Calu3 (cell line): ENCODE measurements at regions of chr4 and their contacts with region 1.

Region 1: GRCh38 chr4:176163041-176163440 is 32.3 kb downstream of the SPATA4 start:
- DNase-seq: no peak
- H3K4me3 Mint-ChIP-seq: no peak overlapping the region
- H3K27ac Mint-ChIP-seq: no peak overlapping the region
- H3K4me1 Mint-ChIP-seq: no peaks in the 10 kb centered on the region
- H3K27me3 Mint-ChIP-seq: no peaks in the 10 kb centered on the region
- CTCF ChIP-seq: no peak

Region 2: DNA sequence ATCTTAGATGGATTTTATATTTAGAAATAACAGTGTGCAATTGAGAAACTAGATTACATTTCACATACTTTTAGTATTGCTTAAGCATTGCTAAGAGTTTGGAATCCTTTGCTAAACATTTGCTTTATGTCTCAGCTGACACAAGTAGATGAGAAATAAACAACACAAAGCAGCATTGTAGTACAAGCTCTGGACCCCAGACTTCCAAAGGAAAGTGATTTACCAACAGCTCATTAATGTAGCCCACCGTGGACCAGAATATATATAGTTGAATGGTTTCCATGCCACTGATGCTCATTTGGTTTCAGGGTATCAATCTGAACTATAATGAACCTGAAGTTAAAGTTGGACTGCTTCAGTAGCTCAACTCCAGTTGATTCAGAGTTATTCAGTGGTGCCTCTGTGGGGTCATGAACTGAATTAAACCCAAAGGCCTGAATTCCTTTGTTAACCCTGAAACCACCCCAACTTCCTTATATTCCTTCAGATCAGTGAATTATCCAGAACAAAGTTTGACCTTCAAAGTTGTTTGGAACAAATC is 1014.6 kb after region 1 on chr4:
- CTCF ChIA-PET with region 1: no interaction called
- intact Hi-C with region 1: loop called (anchors 10 kb)
- DNase-seq: no peak
- H3K4me3 Mint-ChIP-seq: no peak overlapping the region
- H3K27ac Mint-ChIP-seq: no peak overlapping the region
- H3K4me1 Mint-ChIP-seq: no peaks in the 10 kb centered on the region
- H3K27me3 Mint-ChIP-seq: no peaks in the 10 kb centered on the region
- CTCF ChIP-seq: no peak